Kidney (tissue), 22 donors: ENCODE measurements at regions of chr2 and their contacts with region 1.

Region 1: DNA sequence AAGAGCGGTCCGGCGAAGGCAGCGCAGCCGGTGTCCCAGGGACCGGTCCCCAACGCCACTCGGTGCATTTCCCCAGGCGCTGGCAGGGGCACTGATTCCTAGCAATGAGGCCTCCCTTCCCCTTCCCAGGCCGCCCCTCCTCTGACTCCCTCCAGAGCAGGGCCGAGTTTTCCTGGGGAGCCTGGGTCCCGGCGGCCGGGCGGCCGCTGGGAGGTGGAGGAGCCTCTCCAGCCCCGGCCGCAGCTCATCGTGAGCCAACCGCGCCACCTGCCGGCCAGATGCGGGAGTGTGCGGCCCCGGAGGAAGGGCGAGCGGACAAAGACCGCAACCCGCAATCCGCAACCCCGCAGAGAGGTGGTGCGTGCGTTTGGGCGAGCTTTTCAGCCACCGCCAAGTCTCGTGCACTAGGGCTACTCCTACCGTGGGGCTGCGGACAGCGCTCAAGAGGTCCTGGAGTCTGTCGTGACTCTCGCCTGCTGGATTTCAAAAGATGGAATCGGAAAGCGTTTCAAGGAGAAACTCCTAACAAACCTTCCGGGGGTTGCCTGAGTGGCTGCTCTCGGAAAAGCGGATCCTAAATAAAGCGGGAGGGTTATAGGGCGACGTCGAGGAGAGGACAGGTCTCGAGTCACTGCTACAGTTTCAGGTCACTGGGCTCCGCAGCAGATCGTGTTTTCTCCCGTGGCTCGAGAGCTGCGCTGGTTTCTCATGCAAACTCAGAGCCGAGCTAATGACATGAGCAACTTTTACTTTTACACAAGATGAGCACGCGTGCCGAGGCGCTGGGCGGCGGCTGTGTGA is 1.5 kb upstream of the EPHA4 start:
- DNase-seq: peak; percentile 94 to 97 (median 95)
- H3K4me3 ChIP-seq: peak overlapping the region; percentile 70 to 80 (median 79)
- H3K27ac ChIP-seq: peak overlapping the region; percentile 78
- H3K4me1 ChIP-seq: peaks cover 0 to 13% (median 4%) of the 10 kb centered on the region in 3 donors
- H3K27me3 ChIP-seq: no peaks in the 10 kb centered on the region
- CTCF ChIP-seq: peak; percentile 97

Region 2: GRCh38 chr2:219736209-219736608 is 1837.4 kb before region 1 on chr2:
- intact Hi-C with region 1: loop called (anchors 10 kb)
- DNase-seq: peak in 3 of 5 donors; percentile 55 to 92 (median 90)
- H3K4me3 ChIP-seq: no peak overlapping the region
- H3K27ac ChIP-seq: no peak overlapping the region
- H3K4me1 ChIP-seq: no peaks in the 10 kb centered on the region
- H3K27me3 ChIP-seq: no peaks in the 10 kb centered on the region
- CTCF ChIP-seq: peak; percentile 47

Region 3: DNA sequence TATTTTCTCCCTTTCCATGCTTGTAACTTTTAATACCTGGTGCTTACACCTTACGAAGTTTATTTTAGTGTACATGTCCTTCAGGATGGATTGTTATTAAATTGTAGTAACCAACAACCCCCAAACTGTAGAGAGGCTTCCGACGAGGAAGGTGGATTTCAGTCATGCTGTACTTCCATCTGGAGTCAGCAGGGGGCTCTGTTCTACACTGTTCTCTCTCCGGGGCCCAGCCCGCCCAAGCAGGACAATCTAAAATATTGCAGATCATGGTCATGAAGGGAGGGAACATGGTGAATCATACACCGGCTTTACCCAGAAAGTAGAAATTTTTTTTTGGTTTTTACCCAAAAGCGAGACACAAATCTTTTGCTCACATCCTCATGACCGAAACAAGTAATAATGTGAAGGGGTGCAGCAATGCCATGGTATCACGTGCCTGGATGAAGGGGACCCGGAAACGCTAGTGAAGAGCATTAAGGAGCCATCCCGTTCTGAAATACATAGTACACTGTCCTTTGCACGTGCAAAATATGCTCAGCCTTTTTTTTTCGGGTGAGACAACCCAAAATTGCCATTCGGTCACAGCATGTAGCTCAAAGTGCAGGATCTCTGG is 886.3 kb before region 1 on chr2:
- intact Hi-C with region 1: loop called (anchors 10 kb)
- DNase-seq: peak; percentile 59 to 79 (median 67)
- H3K4me3 ChIP-seq: no peak overlapping the region
- H3K27ac ChIP-seq: no peak overlapping the region
- H3K4me1 ChIP-seq: no peaks in the 10 kb centered on the region
- H3K27me3 ChIP-seq: no peaks in the 10 kb centered on the region
- CTCF ChIP-seq: peak; percentile 77

Region 4: DNA sequence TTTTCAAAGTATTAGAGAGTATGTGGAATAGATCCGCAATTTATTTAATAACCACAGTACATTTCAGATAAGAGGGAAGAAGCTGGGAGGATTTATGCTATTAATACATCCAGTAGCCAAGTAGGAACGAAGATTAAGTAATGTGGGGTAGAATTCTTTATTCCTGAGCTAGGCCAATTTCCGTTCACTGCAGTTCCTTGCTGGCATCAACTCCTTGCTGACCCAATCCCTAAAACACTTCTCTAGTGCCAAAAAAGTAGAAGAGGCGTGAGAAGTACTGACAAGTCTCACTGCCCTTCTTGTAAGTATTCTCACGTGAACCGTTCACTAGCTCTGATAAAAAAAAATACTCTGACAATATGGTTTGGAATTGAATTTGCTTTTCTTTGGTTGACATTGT is 212.9 kb before region 1 on chr2:
- intact Hi-C with region 1: no loop called
- DNase-seq: no peak
- H3K4me3 ChIP-seq: no peak overlapping the region
- H3K27ac ChIP-seq: no peak overlapping the region
- H3K4me1 ChIP-seq: no peaks in the 10 kb centered on the region
- H3K27me3 ChIP-seq: no peaks in the 10 kb centered on the region
- CTCF ChIP-seq: no peak

Region 5: GRCh38 chr2:221482666-221483455 is 90.8 kb before region 1 on chr2:
- intact Hi-C with region 1: no loop called
- DNase-seq: no peak
- H3K4me3 ChIP-seq: no peak overlapping the region
- H3K27ac ChIP-seq: no peak overlapping the region
- H3K4me1 ChIP-seq: no peaks in the 10 kb centered on the region
- H3K27me3 ChIP-seq: no peaks in the 10 kb centered on the region
- CTCF ChIP-seq: no peak